CD8-positive, alpha-beta T cell (primary cell): ENCODE measurements at regions of chr13 and their contacts with region 1.

Region 1: DNA sequence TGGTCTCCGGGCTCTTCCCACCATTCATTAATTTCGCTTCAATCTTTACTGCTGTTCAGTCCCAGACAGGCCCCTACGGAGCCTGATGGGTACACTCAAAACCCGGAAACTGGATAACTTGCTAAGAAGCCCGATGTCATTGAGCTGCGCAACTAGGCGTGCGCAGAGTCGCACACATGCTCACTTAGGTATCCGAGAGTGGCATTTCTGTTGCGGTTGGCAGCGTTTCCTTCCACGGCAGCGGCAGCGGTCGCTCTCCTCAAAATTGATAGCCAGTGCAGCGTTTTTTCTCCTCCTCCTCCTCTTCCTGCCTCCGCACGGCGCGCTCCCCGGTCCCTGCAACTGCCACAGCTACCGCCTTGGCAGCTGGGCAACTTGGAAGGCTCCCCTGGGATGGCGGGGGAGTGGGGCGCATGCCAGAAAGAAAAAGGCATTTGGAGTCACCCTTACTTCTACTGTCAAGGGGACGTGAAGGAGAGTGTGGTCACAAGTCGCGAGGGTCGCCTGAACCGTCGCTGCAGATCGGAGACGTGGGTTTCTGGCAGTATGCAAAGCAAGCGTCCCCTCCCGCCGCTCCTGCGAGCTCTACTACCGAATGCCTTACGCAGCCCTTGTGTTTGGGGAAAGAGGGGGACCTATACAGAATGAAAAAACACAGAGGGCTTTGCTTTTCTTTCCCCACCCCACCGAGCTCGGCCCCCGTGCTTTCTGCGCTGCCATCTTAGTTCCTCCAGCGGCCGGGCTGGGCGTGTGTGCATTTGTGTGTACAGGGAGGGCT is 2.4 kb upstream of the MYCBP2 start:
- DNase-seq: peak; percentile 75 to 99 (median 88)
- ATAC-seq: peak; percentile 65
- H3K4me3 ChIP-seq: peak overlapping the region; percentile 81 to 98
- H3K4me3 Mint-ChIP-seq: peak overlapping the region; percentile 91
- H3K27ac ChIP-seq: peak overlapping the region; percentile 64 to 85
- H3K27ac Mint-ChIP-seq: peak overlapping the region; percentile 97
- H3K4me1 ChIP-seq: peaks cover 42% of the 10 kb centered on the region
- H3K4me1 Mint-ChIP-seq: peaks cover 49% of the 10 kb centered on the region
- H3K27me3 ChIP-seq: no peaks in the 10 kb centered on the region
- H3K27me3 Mint-ChIP-seq: no peaks in the 10 kb centered on the region
- CTCF ChIP-seq: no peak

Region 2: GRCh38 chr13:76991796-76992547 is 337.4 kb before region 1 on chr13 and contains the start of gene CLN5:
- CTCF ChIA-PET with region 1: no interaction called
- POLR2A ChIA-PET with region 1: interaction called, 11 read pairs
- intact Hi-C with region 1: loop called (anchors 1 to 5 kb)
- DNase-seq: peak; percentile 91 to 98 (median 94)
- ATAC-seq: peak; percentile 83
- H3K4me3 ChIP-seq: peak within 1 kb of the TSS; percentile 72 to 86
- H3K4me3 Mint-ChIP-seq: peak within 1 kb of the TSS; percentile 95
- H3K27ac ChIP-seq: peak within 1 kb of the TSS; percentile 84 to 97
- H3K27ac Mint-ChIP-seq: peak within 1 kb of the TSS; percentile 99
- H3K4me1 ChIP-seq: peaks cover 31% of the 10 kb centered on the region
- H3K4me1 Mint-ChIP-seq: peaks cover 53% of the 10 kb centered on the region
- H3K27me3 ChIP-seq: peaks cover 0 to 13% of the 10 kb centered on the region in 2 experiments
- H3K27me3 Mint-ChIP-seq: peaks cover 12% of the 10 kb centered on the region
- CTCF ChIP-seq: no peak
- total RNA-seq, gene CLN5: 23.3 to 23.4 TPM

Region 3: DNA sequence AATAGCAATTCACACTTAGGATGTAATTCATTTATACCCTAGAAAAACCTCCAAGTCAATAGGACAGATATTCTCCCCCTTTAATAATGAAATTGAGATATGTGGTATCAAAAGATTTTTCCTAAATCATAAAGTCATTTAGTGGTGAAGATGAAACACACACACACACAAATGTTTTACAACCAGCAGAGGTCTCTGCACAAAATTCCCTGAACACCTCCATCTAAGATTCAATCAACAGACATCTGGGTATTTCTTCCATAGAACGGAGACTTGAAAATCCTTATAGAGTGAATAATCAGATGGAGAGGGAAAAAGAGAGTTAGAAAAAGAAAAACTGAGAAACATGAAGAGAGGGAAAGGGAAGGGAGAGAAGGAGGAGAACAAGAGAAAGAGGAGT is 55.2 kb before region 1 on chr13:
- CTCF ChIA-PET with region 1: interaction called, 4 read pairs
- POLR2A ChIA-PET with region 1: interaction called, 3 read pairs
- intact Hi-C with region 1: loop called in 1 of 2 experiments (anchors 2 kb)
- DNase-seq: peak in 1 of 9 experiments; percentile 20
- ATAC-seq: no peak
- H3K4me3 ChIP-seq: no peak overlapping the region
- H3K4me3 Mint-ChIP-seq: no peak overlapping the region
- H3K27ac ChIP-seq: no peak overlapping the region
- H3K27ac Mint-ChIP-seq: peak overlapping the region; percentile 66
- H3K4me1 ChIP-seq: no peaks in the 10 kb centered on the region
- H3K4me1 Mint-ChIP-seq: peaks cover 17% of the 10 kb centered on the region
- H3K27me3 ChIP-seq: no peaks in the 10 kb centered on the region
- H3K27me3 Mint-ChIP-seq: no peaks in the 10 kb centered on the region
- CTCF ChIP-seq: peak; percentile 18

Region 4: DNA sequence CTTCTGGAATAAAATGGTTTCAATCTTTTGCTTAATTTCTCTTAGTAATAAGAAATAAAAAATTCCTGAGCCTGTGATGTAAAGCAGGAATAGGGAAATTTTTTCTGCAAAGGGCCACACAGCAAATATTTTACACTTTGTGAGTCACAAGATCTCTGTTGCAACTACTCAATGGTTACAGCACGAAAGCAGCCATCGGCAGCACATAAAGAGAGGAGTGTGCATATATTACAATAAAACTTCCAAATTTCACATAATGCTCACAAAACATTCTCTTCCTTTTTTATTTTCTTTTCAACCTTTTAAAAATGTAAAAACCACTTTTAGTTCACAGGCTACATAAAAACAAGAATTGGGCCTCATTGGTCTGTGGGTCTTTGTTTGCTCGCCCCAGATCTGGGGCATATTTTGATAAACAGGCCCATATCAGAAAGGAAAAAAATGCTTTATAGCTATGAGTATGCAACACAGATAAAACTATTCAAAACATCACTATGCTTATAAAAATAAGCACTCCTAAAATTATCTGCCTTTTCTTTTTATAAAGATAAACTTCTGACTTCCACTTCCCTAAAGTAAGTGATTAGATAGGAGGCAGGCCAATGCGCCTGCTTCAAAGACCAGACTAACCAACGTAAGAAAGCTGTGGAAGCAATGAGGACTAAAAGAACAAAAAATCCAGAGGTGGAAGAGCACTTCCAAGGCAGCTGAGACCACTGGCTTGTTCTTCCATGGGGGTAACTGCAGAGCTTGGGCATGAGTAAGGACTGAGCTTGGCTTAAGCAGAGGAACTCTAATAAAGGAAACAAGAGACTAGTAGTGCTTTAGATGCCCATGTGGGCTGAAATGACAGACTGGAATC is 28.9 kb before region 1 on chr13:
- CTCF ChIA-PET with region 1: no interaction called
- POLR2A ChIA-PET with region 1: interaction called, 4 read pairs
- intact Hi-C with region 1: loop called in 1 of 2 experiments (anchors 5 kb)
- DNase-seq: no peak
- ATAC-seq: no peak
- H3K4me3 ChIP-seq: no peak overlapping the region
- H3K4me3 Mint-ChIP-seq: no peak overlapping the region
- H3K27ac ChIP-seq: no peak overlapping the region
- H3K27ac Mint-ChIP-seq: no peak overlapping the region
- H3K4me1 ChIP-seq: peaks cover 40% of the 10 kb centered on the region
- H3K4me1 Mint-ChIP-seq: peaks cover 70% of the 10 kb centered on the region
- H3K27me3 ChIP-seq: no peaks in the 10 kb centered on the region
- H3K27me3 Mint-ChIP-seq: no peaks in the 10 kb centered on the region
- CTCF ChIP-seq: no peak

Region 5: GRCh38 chr13:77316430-77316829 is 12.9 kb before region 1 on chr13:
- CTCF ChIA-PET with region 1: interaction called, 9 read pairs
- POLR2A ChIA-PET with region 1: interaction called, 10 read pairs
- intact Hi-C with region 1: loop called in 1 of 2 experiments (anchors 1 kb)
- DNase-seq: no peak
- ATAC-seq: no peak
- H3K4me3 ChIP-seq: no peak overlapping the region
- H3K4me3 Mint-ChIP-seq: peak overlapping the region; percentile 26
- H3K27ac ChIP-seq: no peak overlapping the region
- H3K27ac Mint-ChIP-seq: peak overlapping the region; percentile 66
- H3K4me1 ChIP-seq: peaks cover 68% of the 10 kb centered on the region
- H3K4me1 Mint-ChIP-seq: peaks cover 88% of the 10 kb centered on the region
- H3K27me3 ChIP-seq: no peaks in the 10 kb centered on the region
- H3K27me3 Mint-ChIP-seq: no peaks in the 10 kb centered on the region
- CTCF ChIP-seq: no peak

Region 6: DNA sequence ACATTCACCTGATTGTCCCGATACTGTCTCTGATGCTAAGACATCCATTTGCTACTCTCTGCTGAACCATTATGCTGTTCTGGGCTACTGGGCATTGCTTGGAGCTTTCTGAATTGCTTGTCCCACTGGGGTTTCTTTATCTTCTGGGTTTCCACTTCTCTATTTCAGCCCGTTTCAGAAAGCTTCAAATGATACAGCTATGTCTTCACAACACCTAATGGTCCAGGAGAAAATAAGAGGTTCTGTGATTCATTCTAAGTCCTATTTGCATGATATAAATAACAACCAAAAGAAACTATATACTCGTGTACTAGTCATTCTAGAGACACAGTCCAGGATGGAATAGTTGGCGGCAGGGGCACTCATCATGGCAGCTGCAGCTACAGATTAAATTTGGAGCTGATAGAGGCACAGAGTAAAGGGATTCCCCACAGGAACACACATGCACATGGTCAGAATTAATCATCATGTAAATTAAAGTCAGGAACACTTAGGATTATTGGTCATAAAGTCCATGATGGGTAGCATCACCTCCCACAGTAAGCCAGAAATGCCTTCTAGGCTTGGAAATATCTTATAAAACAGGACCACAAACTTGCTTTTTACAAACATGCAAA is 172.9 kb after region 1 on chr13:
- CTCF ChIA-PET with region 1: no interaction called
- POLR2A ChIA-PET with region 1: no interaction called
- intact Hi-C with region 1: no loop called
- DNase-seq: no peak
- ATAC-seq: no peak
- H3K4me3 ChIP-seq: no peak overlapping the region
- H3K4me3 Mint-ChIP-seq: no peak overlapping the region
- H3K27ac ChIP-seq: no peak overlapping the region
- H3K27ac Mint-ChIP-seq: no peak overlapping the region
- H3K4me1 ChIP-seq: no peaks in the 10 kb centered on the region
- H3K4me1 Mint-ChIP-seq: no peaks in the 10 kb centered on the region
- H3K27me3 ChIP-seq: no peaks in the 10 kb centered on the region
- H3K27me3 Mint-ChIP-seq: peaks cover 4% of the 10 kb centered on the region
- CTCF ChIP-seq: no peak

Region 7: GRCh38 chr13:78658635-78659449 is 1329.5 kb after region 1 on chr13 and contains the start of gene OBI1:
- CTCF ChIA-PET with region 1: no interaction called
- POLR2A ChIA-PET with region 1: no interaction called
- intact Hi-C with region 1: loop called in 1 of 2 experiments (anchors 10 kb)
- DNase-seq: peak; percentile 80 to 94 (median 91)
- ATAC-seq: peak; percentile 97
- H3K4me3 ChIP-seq: peak within 1 kb of the TSS; percentile 83 to 100
- H3K4me3 Mint-ChIP-seq: peak within 1 kb of the TSS; percentile 98
- H3K27ac ChIP-seq: peak within 1 kb of the TSS; percentile 64 to 70
- H3K27ac Mint-ChIP-seq: peak within 1 kb of the TSS; percentile 95
- H3K4me1 ChIP-seq: peaks cover 7% of the 10 kb centered on the region
- H3K4me1 Mint-ChIP-seq: peaks cover 42% of the 10 kb centered on the region
- H3K27me3 ChIP-seq: no peaks in the 10 kb centered on the region
- H3K27me3 Mint-ChIP-seq: no peaks in the 10 kb centered on the region
- CTCF ChIP-seq: no peak
- total RNA-seq, gene OBI1: 3.5 to 4.0 TPM